Activated CD4-positive, alpha-beta T cell treated with anti-CD3 and anti-CD28 coated beads for 36 hours (primary cell): ENCODE measurements at regions of chr2 and their contacts with region 1.

Region 1: GRCh38 chr2:102240640-102241370 is 54.0 kb downstream of the IL1RL2 start:
- DNase-seq: peak; percentile 94
- ATAC-seq: peak; percentile 94
- H3K4me3 Mint-ChIP-seq: peak overlapping the region; percentile 15
- H3K27ac Mint-ChIP-seq: peak overlapping the region; percentile 84
- H3K4me1 Mint-ChIP-seq: peaks cover 42% of the 10 kb centered on the region
- H3K27me3 Mint-ChIP-seq: no peaks in the 10 kb centered on the region

Region 2: GRCh38 chr2:101419096-101419663 is 821.6 kb before region 1 on chr2:
- CTCF ChIA-PET with region 1: interaction called, 3 read pairs
- POLR2A ChIA-PET with region 1: no interaction called
- intact Hi-C with region 1: loop called in 1 of 2 experiments (anchors 1 kb)
- DNase-seq: peak; percentile 75
- ATAC-seq: peak; percentile 84
- H3K4me3 Mint-ChIP-seq: no peak overlapping the region
- H3K27ac Mint-ChIP-seq: no peak overlapping the region
- H3K4me1 Mint-ChIP-seq: no peaks in the 10 kb centered on the region
- H3K27me3 Mint-ChIP-seq: no peaks in the 10 kb centered on the region

Region 3: DNA sequence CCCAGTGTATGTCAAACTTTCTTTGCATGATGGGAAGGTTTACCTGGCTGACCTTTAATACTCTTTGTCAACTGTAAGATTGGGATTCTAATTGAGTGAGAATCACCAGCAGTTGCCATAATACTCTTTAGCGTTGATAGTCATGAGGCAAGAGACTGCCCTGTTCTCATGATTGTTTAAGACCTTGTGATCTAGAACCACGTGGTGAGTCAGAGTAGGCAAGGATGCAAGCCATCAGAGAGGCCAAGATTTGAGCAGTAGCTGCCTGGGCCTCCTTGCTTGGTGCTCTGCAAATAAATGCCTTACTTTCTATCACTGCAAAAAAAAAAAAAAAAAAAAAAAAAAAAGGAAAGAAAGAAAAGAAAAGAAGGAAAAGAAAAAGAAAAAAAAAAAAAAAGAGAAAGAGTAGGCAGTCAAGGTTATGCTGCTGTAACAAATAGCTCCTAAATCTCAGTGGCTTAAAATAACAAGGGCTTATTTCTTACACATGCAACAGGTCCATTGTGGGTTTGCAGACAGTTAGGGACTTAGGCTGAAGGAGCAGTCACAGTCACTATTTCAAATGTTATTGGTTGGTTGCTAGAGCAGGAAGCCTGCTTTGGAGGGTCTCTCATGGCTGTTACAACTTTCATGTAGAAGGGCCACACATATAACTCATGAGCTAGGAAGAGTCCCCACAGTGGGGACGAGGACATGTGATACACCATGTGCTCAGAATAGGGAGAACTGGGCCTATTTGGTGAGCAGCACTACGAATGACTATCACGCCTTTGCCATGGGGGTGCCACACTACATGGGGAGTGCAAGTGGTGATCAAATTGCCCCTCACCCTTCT is 227.4 kb before region 1 on chr2:
- CTCF ChIA-PET with region 1: interaction called, 38 read pairs
- POLR2A ChIA-PET with region 1: no interaction called
- intact Hi-C with region 1: no loop called
- DNase-seq: peak; percentile 39
- ATAC-seq: peak; percentile 45
- H3K4me3 Mint-ChIP-seq: no peak overlapping the region
- H3K27ac Mint-ChIP-seq: peak overlapping the region; percentile 83
- H3K4me1 Mint-ChIP-seq: peaks cover 49% of the 10 kb centered on the region
- H3K27me3 Mint-ChIP-seq: no peaks in the 10 kb centered on the region

Region 4: DNA sequence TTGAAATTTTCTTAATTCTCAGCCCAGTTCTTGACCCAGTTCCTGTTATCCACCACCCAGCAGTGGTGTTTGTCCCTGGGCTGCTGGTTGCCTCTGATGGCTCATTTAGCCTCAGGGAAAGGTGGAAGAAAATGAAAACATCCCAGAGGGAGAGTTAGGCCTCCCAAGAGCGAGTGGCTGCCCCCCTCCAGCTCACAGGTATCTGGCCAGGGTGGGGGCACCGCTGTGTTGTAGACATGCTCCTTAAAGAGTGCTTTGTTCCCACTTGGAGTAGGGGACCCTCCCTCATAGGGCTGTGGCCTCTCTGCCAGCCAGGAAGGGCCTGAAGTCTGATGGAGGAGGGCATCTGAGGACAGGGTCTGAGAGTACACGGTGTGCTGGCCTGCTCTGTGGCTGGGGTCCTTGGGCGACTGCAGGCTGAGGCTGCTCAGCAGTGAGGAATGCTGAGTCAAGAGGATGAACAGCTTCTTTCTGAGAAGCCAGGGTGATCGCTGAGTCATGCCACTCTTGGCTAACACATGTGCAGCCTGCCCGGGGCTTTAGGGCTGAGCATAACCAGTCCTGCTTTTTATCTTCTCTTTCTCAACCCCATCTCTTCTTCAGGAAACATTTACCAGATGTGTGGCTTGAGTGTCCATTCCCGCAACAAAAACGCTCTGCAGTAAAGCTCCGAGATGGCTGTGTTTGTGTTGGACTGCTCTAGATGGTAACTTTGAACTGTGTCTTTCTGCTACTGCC is 176.7 kb before region 1 on chr2:
- CTCF ChIA-PET with region 1: interaction called, 19 read pairs
- POLR2A ChIA-PET with region 1: no interaction called
- intact Hi-C with region 1: no loop called
- DNase-seq: peak; percentile 77
- ATAC-seq: peak; percentile 35
- H3K4me3 Mint-ChIP-seq: no peak overlapping the region
- H3K27ac Mint-ChIP-seq: peak overlapping the region; percentile 86
- H3K4me1 Mint-ChIP-seq: peaks cover 38% of the 10 kb centered on the region
- H3K27me3 Mint-ChIP-seq: no peaks in the 10 kb centered on the region

Region 5: DNA sequence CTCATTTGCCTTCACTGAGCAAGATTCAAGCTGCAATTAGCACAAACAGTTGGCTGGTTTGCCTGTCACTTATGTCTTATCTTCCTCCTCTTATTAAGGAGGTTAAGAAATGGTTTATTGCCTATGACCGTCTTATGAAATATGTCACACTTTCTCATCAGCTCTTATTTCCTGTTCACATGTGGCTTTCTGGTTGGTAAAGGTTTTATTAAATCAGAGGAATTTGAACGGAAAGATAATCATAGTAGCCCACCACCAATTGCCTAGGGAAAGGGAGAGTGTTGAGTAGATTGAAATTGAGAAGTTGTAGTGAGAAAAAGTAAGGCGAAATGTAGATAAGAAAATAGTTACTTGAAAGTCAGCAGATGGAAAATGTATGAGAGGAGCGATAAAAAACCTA is 102.5 kb before region 1 on chr2:
- CTCF ChIA-PET with region 1: interaction called, 19 read pairs
- POLR2A ChIA-PET with region 1: no interaction called
- intact Hi-C with region 1: no loop called
- DNase-seq: no peak
- ATAC-seq: peak; percentile 7
- H3K4me3 Mint-ChIP-seq: peak overlapping the region; percentile 7
- H3K27ac Mint-ChIP-seq: peak overlapping the region; percentile 89
- H3K4me1 Mint-ChIP-seq: peaks cover 64% of the 10 kb centered on the region
- H3K27me3 Mint-ChIP-seq: peaks cover 23% of the 10 kb centered on the region

Region 6: DNA sequence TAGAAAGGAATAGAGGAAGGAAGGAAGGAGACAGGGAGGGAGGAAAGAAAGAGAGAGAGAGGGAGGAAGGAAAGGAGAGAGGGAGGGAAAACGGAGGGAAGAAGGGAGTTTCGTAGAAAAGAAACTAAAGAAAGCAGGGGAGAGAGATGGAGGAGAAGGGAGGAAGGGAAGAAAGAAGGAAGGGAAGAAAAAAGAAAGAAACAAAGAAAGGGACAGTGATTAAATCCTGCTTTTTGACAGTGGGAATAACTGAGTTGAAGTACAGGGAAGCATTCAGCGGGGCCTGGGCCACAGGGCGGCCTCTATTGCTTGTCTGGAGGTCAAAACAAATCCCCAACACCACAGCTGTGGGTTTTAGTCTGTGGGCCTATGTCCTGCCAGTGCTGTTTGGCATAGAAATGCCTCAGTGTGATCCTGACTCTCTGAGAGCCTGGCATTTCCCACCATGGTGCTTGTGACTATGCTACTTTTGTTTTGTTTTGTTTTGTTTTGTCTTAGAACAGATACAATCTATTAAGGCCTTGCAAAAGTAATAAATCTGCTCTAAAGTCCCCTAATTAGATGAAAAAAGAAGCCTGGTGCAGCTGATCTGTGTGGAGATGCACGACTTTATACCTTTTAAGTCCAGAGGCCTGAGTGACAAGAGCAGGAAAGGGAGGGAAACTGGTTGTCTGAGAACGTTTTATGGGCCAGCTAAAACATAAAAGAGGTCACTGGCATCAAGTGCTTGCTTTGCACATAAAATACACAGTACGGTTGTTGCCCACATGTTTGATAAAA is 14.0 kb before region 1 on chr2:
- CTCF ChIA-PET with region 1: interaction called, 15 read pairs
- POLR2A ChIA-PET with region 1: no interaction called
- intact Hi-C with region 1: no loop called
- DNase-seq: no peak
- ATAC-seq: no peak
- H3K4me3 Mint-ChIP-seq: peak overlapping the region; percentile 26
- H3K27ac Mint-ChIP-seq: peak overlapping the region; percentile 94
- H3K4me1 Mint-ChIP-seq: peaks cover 70% of the 10 kb centered on the region
- H3K27me3 Mint-ChIP-seq: no peaks in the 10 kb centered on the region

Region 7: GRCh38 chr2:102449370-102449974 is 208.7 kb after region 1 on chr2:
- CTCF ChIA-PET with region 1: interaction called, 29 read pairs
- POLR2A ChIA-PET with region 1: no interaction called
- intact Hi-C with region 1: no loop called
- DNase-seq: peak; percentile 85
- ATAC-seq: peak; percentile 58
- H3K4me3 Mint-ChIP-seq: no peak overlapping the region
- H3K27ac Mint-ChIP-seq: no peak overlapping the region
- H3K4me1 Mint-ChIP-seq: peaks cover 6% of the 10 kb centered on the region
- H3K27me3 Mint-ChIP-seq: no peaks in the 10 kb centered on the region

Region 8: GRCh38 chr2:102487761-102488466 is 247.1 kb after region 1 on chr2:
- CTCF ChIA-PET with region 1: no interaction called
- POLR2A ChIA-PET with region 1: no interaction called
- intact Hi-C with region 1: no loop called
- DNase-seq: no peak
- ATAC-seq: no peak
- H3K4me3 Mint-ChIP-seq: no peak overlapping the region
- H3K27ac Mint-ChIP-seq: no peak overlapping the region
- H3K4me1 Mint-ChIP-seq: peaks cover 8% of the 10 kb centered on the region
- H3K27me3 Mint-ChIP-seq: peaks cover 23% of the 10 kb centered on the region

Region 9: GRCh38 chr2:102520028-102520427 is 279.2 kb after region 1 on chr2:
- CTCF ChIA-PET with region 1: no interaction called
- POLR2A ChIA-PET with region 1: no interaction called
- intact Hi-C with region 1: no loop called
- DNase-seq: peak; percentile 52
- ATAC-seq: peak; percentile 80
- H3K4me3 Mint-ChIP-seq: no peak overlapping the region
- H3K27ac Mint-ChIP-seq: no peak overlapping the region
- H3K4me1 Mint-ChIP-seq: no peaks in the 10 kb centered on the region
- H3K27me3 Mint-ChIP-seq: peaks cover 2% of the 10 kb centered on the region

Region 10: GRCh38 chr2:102932471-102932870 is 691.7 kb after region 1 on chr2:
- CTCF ChIA-PET with region 1: no interaction called
- POLR2A ChIA-PET with region 1: no interaction called
- intact Hi-C with region 1: no loop called
- DNase-seq: no peak
- ATAC-seq: no peak
- H3K4me3 Mint-ChIP-seq: no peak overlapping the region
- H3K27ac Mint-ChIP-seq: no peak overlapping the region
- H3K4me1 Mint-ChIP-seq: no peaks in the 10 kb centered on the region
- H3K27me3 Mint-ChIP-seq: peaks cover under 1% of the 10 kb centered on the region

Region 11: DNA sequence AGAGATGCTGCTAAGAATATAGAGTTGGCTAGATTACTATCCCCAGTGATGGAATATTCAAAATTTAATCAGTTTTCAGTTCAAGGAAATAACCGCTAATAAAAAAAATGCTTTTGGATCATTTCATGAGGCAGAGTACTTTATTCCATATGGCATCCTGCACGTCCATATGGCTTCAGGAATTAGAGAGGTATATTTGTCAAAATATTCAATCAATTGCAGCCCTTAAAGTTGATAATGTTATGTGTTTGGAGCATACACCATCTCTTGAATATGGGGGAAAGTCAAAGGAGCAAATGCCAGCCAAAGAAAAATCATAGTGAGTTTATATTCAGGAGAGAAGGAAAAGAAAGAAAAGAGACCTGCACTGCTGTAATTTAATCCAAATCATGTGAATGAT is 787.4 kb after region 1 on chr2:
- CTCF ChIA-PET with region 1: no interaction called
- POLR2A ChIA-PET with region 1: no interaction called
- intact Hi-C with region 1: no loop called
- DNase-seq: no peak
- ATAC-seq: no peak
- H3K4me3 Mint-ChIP-seq: no peak overlapping the region
- H3K27ac Mint-ChIP-seq: no peak overlapping the region
- H3K4me1 Mint-ChIP-seq: no peaks in the 10 kb centered on the region
- H3K27me3 Mint-ChIP-seq: peaks cover 3% of the 10 kb centered on the region